Activated B cell treated with CpG ODN at 0.5 μM for 24 hours (primary cell): ENCODE measurements at regions of chr1 and their contacts with region 1.

Region 1: DNA sequence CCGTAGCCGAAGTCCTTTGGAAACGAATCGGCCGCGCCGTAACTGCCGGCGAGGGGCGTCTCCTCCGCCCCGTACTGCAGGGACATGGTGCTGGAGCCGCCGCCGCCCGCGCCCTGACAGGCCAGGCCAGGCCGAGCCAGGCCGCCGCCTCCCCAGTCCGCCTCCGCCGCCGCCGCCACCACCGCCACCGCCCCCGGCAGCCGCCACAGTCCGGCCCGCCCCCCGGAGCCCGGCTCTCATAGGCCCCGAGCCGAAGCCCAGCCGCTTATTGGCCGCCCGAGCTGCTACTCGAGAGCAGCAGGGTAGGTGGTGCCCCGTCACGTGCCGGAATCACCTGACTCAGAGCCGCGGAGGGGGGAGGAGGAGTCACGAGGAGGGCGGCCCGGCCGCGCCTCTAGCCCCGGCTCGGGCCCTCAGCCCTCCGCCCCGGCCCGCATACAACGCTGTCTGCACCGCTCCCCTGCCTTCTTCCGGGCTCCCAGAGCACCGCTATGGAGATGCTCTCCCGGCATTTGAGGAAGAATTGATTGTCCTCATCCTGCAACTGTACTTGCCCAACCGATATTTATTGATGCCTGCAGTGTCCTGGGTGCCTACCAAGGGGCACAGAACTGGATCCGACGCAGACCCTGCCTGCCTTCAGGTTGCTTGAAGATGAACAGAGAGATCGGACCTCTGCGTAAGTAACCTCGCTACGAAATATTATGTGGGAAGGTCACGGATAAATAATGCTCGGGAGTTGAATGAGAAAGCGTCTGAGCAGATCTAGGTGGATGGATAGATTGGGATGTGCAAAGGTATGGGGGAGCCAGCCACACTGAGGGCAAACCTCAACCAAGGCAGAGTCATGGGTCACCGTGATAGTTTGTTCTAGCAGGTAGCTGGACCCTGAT is at the start of gene RRAGC:
- DNase-seq: peak; percentile 96
- ATAC-seq: peak; percentile 91
- H3K4me3 Mint-ChIP-seq: peak within 1 kb of the TSS; percentile 95
- H3K27ac Mint-ChIP-seq: peak within 1 kb of the TSS; percentile 93
- H3K4me1 Mint-ChIP-seq: peaks cover 53% of the 10 kb centered on the region
- H3K27me3 Mint-ChIP-seq: no peaks in the 10 kb centered on the region
- CTCF ChIP-seq: no peak
- total RNA-seq, gene RRAGC: 33.7 and 35.9 TPM in 2 replicates

Region 2: DNA sequence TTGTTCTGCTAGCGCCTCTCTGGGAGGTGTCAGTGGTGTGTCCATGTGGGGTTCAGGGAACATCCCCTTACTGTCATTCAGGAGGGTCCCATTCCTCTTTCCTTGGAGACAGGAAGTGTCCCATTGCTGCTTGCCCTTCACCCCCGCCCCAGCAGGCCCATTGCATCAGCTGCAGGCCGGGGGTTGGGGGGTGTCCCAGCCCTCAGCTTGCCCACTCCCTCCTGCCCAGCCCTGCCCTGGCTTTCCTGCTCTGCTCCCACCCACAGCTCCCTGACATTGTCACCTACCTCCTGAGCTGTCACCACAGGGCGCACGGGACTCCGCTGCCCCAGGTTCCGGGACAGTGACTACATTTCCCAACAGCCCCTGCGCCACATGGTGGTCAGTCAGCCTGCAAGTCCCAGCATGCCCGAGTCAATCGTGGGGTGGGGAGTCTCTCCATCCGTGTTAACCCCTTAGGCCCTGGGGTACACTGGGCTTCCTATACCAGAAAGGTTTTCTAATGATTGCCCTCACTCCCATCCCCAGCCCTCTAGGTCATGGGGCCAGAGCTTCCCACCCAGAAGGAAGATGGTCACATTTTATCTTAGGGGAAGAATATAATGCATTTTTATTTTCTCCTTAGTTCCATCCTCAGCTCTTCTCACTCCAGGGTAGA is 913.0 kb before region 1 on chr1 and contains the start of gene INPP5B:
- CTCF ChIA-PET with region 1: no interaction called
- POLR2A ChIA-PET with region 1: no interaction called
- intact Hi-C with region 1: loop called (anchors 1 kb)
- DNase-seq: peak; percentile 74
- ATAC-seq: peak; percentile 100
- H3K4me3 Mint-ChIP-seq: peak within 1 kb of the TSS; percentile 100
- H3K27ac Mint-ChIP-seq: peak within 1 kb of the TSS; percentile 97
- H3K4me1 Mint-ChIP-seq: peaks cover 23% of the 10 kb centered on the region
- H3K27me3 Mint-ChIP-seq: no peaks in the 10 kb centered on the region
- CTCF ChIP-seq: no peak
- total RNA-seq, gene INPP5B: 63.4 and 70.3 TPM in 2 replicates

Region 3: GRCh38 chr1:38512789-38513188 is 347.0 kb before region 1 on chr1:
- CTCF ChIA-PET with region 1: no interaction called
- POLR2A ChIA-PET with region 1: no interaction called
- intact Hi-C with region 1: no loop called
- DNase-seq: no peak
- ATAC-seq: no peak
- H3K4me3 Mint-ChIP-seq: no peak overlapping the region
- H3K27ac Mint-ChIP-seq: no peak overlapping the region
- H3K4me1 Mint-ChIP-seq: no peaks in the 10 kb centered on the region
- H3K27me3 Mint-ChIP-seq: peaks cover 22% of the 10 kb centered on the region
- CTCF ChIP-seq: no peak

Region 4: GRCh38 chr1:38873027-38873969 is 13.5 kb after region 1 on chr1 and contains the start of gene MYCBP:
- CTCF ChIA-PET with region 1: interaction called, 5 read pairs
- POLR2A ChIA-PET with region 1: interaction called, 11 read pairs
- intact Hi-C with region 1: loop called (anchors 1 kb)
- DNase-seq: peak; percentile 97
- ATAC-seq: peak; percentile 99
- H3K4me3 Mint-ChIP-seq: peak within 1 kb of the TSS; percentile 92
- H3K27ac Mint-ChIP-seq: peak within 1 kb of the TSS; percentile 83
- H3K4me1 Mint-ChIP-seq: peaks cover 23% of the 10 kb centered on the region
- H3K27me3 Mint-ChIP-seq: no peaks in the 10 kb centered on the region
- CTCF ChIP-seq: no peak
- total RNA-seq, gene MYCBP: 18.6 and 19.2 TPM in 2 replicates

Region 5: DNA sequence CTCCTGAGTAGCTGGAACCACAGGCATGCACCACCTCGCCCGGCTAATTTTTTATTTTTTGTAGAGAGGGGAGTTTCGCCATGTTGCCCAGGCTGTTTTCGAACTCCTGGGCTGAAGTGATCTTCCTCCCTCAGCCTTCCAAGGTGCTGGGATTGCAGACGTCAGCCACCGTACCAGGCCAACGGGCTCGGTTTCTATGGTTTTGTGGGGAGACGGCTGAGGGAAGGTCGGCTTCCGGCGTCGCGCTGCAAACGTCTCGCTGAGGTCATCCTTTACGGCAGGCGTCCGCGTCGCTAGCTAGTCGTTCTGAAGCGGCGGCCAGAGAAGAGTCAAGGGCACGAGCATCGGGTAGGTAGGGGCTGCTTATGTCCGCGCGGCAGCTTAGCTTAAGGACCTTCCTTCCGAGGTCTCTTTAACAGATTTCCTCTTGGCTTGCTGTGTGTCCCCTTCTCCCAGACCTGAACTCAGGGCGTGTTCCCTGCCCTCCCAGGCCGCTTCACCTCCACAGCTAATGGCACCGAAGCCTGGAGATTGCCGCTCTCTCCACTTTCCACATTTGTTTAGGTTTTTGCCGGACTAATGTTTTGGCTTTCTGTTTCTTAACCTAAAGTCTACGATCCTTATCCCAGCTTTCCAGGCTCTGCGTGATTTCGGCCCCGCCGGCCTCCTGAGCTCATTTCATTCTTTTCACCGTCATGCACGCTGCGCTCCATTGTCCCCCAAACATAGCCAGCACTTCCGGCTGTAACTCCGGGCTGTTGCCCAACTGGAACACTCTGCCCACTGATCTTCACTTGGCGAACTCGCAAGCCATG is 166.5 kb after region 1 on chr1 and contains the start of gene NDUFS5:
- CTCF ChIA-PET with region 1: no interaction called
- POLR2A ChIA-PET with region 1: no interaction called
- intact Hi-C with region 1: loop called (anchors 1 kb)
- DNase-seq: peak; percentile 63
- ATAC-seq: peak; percentile 91
- H3K4me3 Mint-ChIP-seq: peak within 1 kb of the TSS; percentile 98
- H3K27ac Mint-ChIP-seq: peak within 1 kb of the TSS; percentile 98
- H3K4me1 Mint-ChIP-seq: peaks cover 16% of the 10 kb centered on the region
- H3K27me3 Mint-ChIP-seq: no peaks in the 10 kb centered on the region
- CTCF ChIP-seq: no peak
- total RNA-seq, gene NDUFS5: 79.3 and 81.3 TPM in 2 replicates

Region 6: DNA sequence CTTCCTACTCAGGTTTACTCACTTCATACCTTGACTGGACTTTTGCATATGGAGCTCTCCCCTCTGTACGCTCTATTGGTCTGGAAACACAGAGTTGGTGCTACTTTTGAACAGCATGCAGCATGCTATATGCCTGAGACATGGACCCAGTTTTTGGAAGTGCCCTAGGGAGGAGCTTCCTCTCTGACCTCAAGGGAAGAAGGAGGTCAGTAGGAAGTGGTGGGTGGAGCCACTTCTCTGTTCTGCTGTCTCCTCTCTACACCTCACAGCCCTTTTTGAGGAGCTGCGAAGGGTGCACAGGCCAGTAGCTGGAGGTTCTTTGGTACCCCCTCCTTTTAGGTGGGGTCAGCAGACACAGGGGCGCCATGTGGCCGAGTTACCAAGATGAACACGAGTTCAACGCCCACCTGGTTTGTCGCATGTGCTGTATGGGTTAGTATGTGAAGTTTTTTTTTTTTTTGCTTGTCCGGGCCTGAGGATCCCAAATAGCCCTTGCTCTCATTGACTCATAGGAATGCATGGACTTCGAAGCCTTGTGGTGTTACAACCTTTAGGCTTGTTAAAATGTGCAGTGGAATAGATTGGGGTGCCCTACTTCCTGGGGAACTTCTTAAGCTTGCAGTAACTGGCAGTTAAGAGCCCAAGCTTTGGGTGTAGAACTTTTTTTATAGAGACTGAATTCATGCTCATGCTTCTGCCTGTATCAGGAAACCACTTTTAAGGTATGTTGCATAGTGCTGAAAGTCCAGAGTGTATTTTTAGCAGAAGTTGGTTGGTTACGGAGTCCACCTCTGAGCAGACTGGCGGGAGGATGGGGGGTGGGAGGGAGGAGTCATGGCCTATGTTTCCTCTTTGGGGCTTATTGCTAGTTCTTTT is 355.4 kb after region 1 on chr1:
- CTCF ChIA-PET with region 1: no interaction called
- POLR2A ChIA-PET with region 1: no interaction called
- intact Hi-C with region 1: loop called (anchors 10 kb)
- DNase-seq: peak; percentile 20
- ATAC-seq: peak; percentile 83
- H3K4me3 Mint-ChIP-seq: peak overlapping the region; percentile 84
- H3K27ac Mint-ChIP-seq: peak overlapping the region; percentile 83
- H3K4me1 Mint-ChIP-seq: peaks cover 55% of the 10 kb centered on the region
- H3K27me3 Mint-ChIP-seq: no peaks in the 10 kb centered on the region
- CTCF ChIP-seq: no peak

Region 7: DNA sequence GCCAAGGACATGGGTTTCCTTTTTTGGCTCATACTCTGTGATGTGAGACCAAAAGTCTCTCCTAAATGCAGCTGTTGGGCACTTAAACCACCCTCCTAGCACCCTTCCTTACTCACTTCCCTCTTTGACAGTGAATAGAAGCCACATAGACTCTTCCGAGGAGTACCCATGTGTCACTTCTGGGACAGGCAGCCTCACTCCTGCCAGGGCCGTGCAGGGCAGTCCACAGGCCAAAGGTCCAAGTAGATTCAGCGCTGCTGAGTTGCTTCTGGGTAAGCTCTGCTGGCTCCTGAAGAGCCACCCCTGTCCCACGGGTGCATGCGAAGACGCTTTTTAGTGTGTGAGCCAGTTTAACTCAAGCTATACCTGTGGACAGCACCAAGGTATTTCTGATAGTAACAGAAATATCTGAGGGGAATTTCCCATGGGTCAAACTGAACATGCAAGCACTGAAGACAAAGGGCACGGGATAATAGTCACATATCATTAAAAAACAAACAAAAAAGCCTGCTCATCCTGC is 965.7 kb after region 1 on chr1:
- CTCF ChIA-PET with region 1: no interaction called
- POLR2A ChIA-PET with region 1: no interaction called
- intact Hi-C with region 1: no loop called
- DNase-seq: no peak
- ATAC-seq: peak; percentile 42
- H3K4me3 Mint-ChIP-seq: no peak overlapping the region
- H3K27ac Mint-ChIP-seq: peak overlapping the region; percentile 30
- H3K4me1 Mint-ChIP-seq: peaks cover 12% of the 10 kb centered on the region
- H3K27me3 Mint-ChIP-seq: peaks cover 4% of the 10 kb centered on the region
- CTCF ChIP-seq: no peak